H1 (cell line): ENCODE measurements at regions of chr12 and their contacts with region 1.

Region 1: DNA sequence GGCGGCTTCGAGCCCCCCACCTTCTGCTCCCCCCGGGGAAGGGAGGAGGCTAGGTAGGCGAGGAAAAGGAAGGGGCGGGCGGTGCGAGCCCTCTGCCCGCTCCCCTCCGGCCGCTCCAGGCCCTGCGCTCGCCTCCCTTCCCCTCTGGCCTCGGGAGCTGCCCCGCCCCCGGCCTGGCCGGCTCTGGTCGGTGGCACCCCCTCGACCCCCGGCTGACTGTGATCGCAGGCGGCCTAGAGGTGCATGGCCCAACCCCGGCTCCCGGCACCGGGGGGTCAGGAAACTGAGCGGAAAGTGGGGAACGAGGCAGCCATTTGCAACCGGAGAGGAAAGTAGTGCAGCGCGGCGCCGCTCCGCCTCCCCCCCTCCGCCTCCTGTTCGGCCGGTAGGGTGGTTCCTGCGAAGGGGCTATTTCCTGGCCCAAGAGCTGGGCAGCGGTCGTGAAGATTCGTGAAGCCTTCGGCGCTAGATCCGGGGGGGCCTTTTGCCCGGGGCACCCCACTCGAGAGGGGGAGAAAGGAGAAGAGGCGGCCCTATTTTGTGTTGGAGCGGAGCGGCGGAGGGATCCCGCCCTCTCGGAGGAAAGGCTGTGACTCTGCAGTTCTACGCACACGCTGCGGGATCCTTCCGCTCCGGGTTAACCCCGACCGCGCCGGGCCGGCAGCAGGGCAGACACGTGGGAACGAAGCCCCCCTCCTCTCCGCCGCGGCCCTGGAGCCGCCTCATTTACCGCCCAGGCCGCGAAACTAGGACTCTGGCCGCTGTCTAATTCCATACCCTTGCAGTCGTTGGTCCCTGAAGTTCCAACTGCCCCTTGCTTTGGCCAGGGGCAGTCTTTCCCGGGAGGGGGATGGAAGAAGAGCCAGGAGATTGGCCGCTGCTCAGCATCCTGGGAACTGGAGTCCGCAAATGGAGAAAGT is at the start of gene KMT2D:
- DNase-seq: peak; percentile 73 to 96
- H3K4me3 ChIP-seq: peak within 1 kb of the TSS; percentile 85 to 97 (median 96)
- H3K27ac ChIP-seq: peak within 1 kb of the TSS; percentile 97
- H3K4me1 ChIP-seq: peaks cover 9 to 36% (median 13%) of the 10 kb centered on the region in 4 experiments
- H3K27me3 ChIP-seq: no peaks in the 10 kb centered on the region
- CTCF ChIP-seq: no peak
- EP300 ChIP-seq: peak in 1 of 2 experiments; percentile 91; a peak in 1 of 3 replicates
- POLR2A ChIP-seq: peak; percentile 14 to 92
- RAD21 ChIP-seq: no peak
- total RNA-seq, gene KMT2D: 86.3 and 92.3 TPM in 2 replicates

Region 2: GRCh38 chr12:49018261-49019119 is 42.0 kb before region 1 on chr12 and contains the start of gene PRKAG1:
- CTCF ChIA-PET with region 1: interaction called, 15 read pairs
- POLR2A ChIA-PET with region 1: interaction called, 5 read pairs
- DNase-seq: peak; percentile 96
- H3K4me3 ChIP-seq: peak within 1 kb of the TSS; percentile 65 to 92 (median 80)
- H3K27ac ChIP-seq: peak within 1 kb of the TSS; percentile 85
- H3K4me1 ChIP-seq: peaks cover 0 to 6% (median 1%) of the 10 kb centered on the region in 4 experiments; a peak in 4 of 7 replicates
- H3K27me3 ChIP-seq: no peaks in the 10 kb centered on the region
- CTCF ChIP-seq: peak; percentile 51 to 66 (median 64)
- EP300 ChIP-seq: peak in 1 of 2 experiments; percentile 48; a peak in 1 of 3 replicates
- POLR2A ChIP-seq: peak; percentile 90 to 96
- RAD21 ChIP-seq: peak; percentile 29 to 32; a peak in 3 of 4 replicates
- total RNA-seq, gene PRKAG1: 36.3 and 38.6 TPM in 2 replicates

Region 3: GRCh38 chr12:49043856-49044258 is 16.6 kb before region 1 on chr12:
- CTCF ChIA-PET with region 1: interaction called, 35 read pairs
- POLR2A ChIA-PET with region 1: interaction called, 13 read pairs
- DNase-seq: peak in 1 of 2 experiments; percentile 96
- H3K4me3 ChIP-seq: no peak overlapping the region
- H3K27ac ChIP-seq: no peak overlapping the region
- H3K4me1 ChIP-seq: no peaks in the 10 kb centered on the region
- H3K27me3 ChIP-seq: no peaks in the 10 kb centered on the region
- CTCF ChIP-seq: peak in 2 of 3 experiments; percentile 71 to 99; a peak in 3 of 4 replicates
- EP300 ChIP-seq: no peak
- POLR2A ChIP-seq: no peak
- RAD21 ChIP-seq: peak; percentile 19 to 20; a peak in 2 of 4 replicates

Region 4: DNA sequence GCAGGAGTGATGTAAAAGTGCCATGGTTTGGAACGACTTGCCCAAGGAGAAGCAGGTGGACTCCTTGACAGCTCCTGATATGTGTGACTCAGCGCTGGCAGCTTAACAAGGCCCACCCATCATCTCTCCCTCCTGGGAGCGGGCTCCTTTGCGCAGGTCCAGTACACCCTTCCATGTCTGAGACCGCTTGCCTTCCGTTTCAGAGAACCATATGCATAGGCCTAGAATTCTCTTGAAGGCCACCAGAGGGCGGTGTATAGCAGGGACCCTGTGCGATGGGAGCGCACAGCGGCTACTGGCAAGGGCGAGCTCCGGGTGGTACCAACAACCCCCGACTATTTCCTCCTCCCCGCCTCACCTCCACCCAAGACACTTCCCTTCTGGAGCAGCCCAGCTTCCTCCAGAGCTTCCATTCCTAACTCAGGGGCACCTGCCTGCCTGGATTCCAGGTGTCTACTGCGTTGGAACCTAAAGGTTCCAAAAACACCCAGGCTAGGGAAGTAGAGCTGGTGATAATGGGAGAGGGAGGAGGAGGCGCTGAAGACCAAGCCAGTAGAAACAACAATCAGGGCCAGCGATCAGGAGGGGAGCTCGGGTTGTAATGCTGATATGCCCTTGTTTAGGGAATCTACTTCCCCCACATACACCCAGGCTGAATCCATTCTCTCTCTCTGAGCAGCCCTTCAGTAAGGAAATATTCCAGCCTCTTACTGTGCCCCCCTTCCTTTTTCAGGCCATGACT is 27.9 kb after region 1 on chr12:
- CTCF ChIA-PET with region 1: interaction called, 129 read pairs
- POLR2A ChIA-PET with region 1: interaction called, 11 read pairs
- DNase-seq: peak in 1 of 2 experiments; percentile 81
- H3K4me3 ChIP-seq: peak overlapping the region in 1 of 4 experiments; percentile 45; a peak in 3 of 8 replicates
- H3K27ac ChIP-seq: no peak overlapping the region
- H3K4me1 ChIP-seq: peaks cover 0 to 36% (median 12%) of the 10 kb centered on the region in 4 experiments; a peak in 6 of 7 replicates
- H3K27me3 ChIP-seq: peaks cover 46 to 69% (median 61%) of the 10 kb centered on the region in 4 experiments
- CTCF ChIP-seq: peak; percentile 84 to 93 (median 89)
- EP300 ChIP-seq: no peak
- POLR2A ChIP-seq: no peak
- RAD21 ChIP-seq: peak; percentile 67 to 74

Region 5: GRCh38 chr12:49110464-49111155 is 50.1 kb after region 1 on chr12 and contains the start of gene LMBR1L:
- CTCF ChIA-PET with region 1: interaction called, 18 read pairs
- POLR2A ChIA-PET with region 1: interaction called, 5 read pairs
- DNase-seq: peak; percentile 90 to 93
- H3K4me3 ChIP-seq: peak within 1 kb of the TSS; percentile 74 to 99 (median 92)
- H3K27ac ChIP-seq: peak within 1 kb of the TSS; percentile 55; the same call in 1 of the 2 replicates
- H3K4me1 ChIP-seq: peaks cover 0 to 10% (median 2%) of the 10 kb centered on the region in 4 experiments; a peak in 3 of 7 replicates
- H3K27me3 ChIP-seq: no peaks in the 10 kb centered on the region
- CTCF ChIP-seq: peak; percentile 9 to 43 (median 40); a peak in 2 of 4 replicates
- EP300 ChIP-seq: no peak
- POLR2A ChIP-seq: peak in 1 of 2 experiments; percentile 60; a peak in 1 of 3 replicates
- RAD21 ChIP-seq: peak in 1 of 2 experiments; percentile 5; a peak in 1 of 4 replicates
- total RNA-seq, gene LMBR1L: 47.7 and 49.6 TPM in 2 replicates